Activated CD4-positive, alpha-beta memory T cell treated with anti-CD3 and anti-CD28 coated beads for 36 hours (primary cell): ENCODE measurements at regions of chr1 and their contacts with region 1.

Region 1: GRCh38 chr1:89125913-89126580 is at the start of gene GBP2:
- DNase-seq: peak; percentile 51
- H3K4me3 Mint-ChIP-seq: peak within 1 kb of the TSS; percentile 95
- H3K27ac Mint-ChIP-seq: peak within 1 kb of the TSS; percentile 99
- H3K4me1 Mint-ChIP-seq: peaks cover 54% of the 10 kb centered on the region
- H3K27me3 Mint-ChIP-seq: no peaks in the 10 kb centered on the region
- total RNA-seq, gene GBP2: 396 to 403 TPM

Region 2: DNA sequence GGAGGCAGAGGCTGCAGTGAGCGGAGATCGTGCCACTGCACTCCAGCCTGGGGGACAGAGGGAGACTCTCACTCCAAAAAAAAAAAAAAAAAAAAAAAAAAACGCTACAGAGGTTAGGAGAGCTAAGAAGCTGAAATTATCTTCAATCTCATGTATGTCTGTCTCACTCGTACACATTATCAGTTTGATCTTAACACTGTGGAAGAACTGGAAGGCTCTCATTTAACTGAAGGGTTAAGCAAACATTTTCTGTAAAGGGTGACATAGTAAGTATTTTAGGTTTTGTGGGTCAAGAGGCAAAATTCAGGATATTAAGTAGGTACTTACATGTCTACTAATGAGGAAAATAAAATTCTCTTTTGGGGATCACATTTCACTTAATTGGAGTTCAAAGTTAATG is 243.8 kb before region 1 on chr1:
- CTCF ChIA-PET with region 1: no interaction called
- POLR2A ChIA-PET with region 1: no interaction called
- intact Hi-C with region 1: no loop called
- DNase-seq: no peak
- H3K4me3 Mint-ChIP-seq: no peak overlapping the region
- H3K27ac Mint-ChIP-seq: peak overlapping the region; percentile 44
- H3K4me1 Mint-ChIP-seq: peaks cover 41% of the 10 kb centered on the region
- H3K27me3 Mint-ChIP-seq: no peaks in the 10 kb centered on the region

Region 3: DNA sequence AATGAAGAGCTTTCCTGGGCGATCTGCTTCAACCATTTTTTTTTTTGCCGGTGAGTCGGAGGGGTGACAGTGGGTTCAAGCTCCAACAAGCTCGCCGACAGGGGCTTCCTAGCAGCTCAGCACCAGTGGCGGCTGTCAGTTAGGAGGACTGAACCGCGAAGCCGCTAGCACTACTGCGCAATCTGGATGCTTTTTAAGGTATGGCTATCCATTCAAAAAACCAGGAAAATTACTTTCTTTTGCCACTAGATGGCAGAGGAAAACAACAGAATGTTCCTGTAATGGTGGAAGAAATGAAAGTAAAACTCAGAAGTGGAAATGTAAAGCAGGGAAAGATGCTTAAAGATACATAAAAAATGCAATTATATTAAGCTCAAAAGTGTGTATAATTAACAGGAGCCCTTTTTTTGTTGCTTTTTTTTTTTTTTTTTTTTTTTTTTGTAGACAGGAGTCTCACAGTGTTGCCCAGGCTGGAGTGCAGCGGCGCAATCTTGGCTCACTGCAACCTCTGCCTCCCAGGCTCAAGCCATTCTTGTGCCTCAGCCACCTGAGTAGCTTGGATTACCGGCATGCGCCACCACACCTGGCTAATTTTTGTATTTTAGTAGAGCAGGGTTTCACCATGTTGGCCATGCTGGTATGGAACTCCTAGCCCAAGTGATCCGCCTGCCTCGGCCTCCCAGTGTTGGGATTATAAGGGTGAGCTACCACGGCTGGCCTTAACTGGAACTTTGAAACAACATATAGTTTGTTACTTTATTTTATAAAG is 142.1 kb before region 1 on chr1:
- CTCF ChIA-PET with region 1: interaction called, 3 read pairs
- POLR2A ChIA-PET with region 1: no interaction called
- intact Hi-C with region 1: loop called (anchors 2 kb)
- DNase-seq: peak; percentile 41
- H3K4me3 Mint-ChIP-seq: peak overlapping the region; percentile 17
- H3K27ac Mint-ChIP-seq: peak overlapping the region; percentile 80
- H3K4me1 Mint-ChIP-seq: peaks cover 87% of the 10 kb centered on the region
- H3K27me3 Mint-ChIP-seq: no peaks in the 10 kb centered on the region

Region 4: GRCh38 chr1:89005286-89006151 is 120.5 kb before region 1 on chr1:
- CTCF ChIA-PET with region 1: no interaction called
- POLR2A ChIA-PET with region 1: no interaction called
- intact Hi-C with region 1: no loop called
- DNase-seq: no peak
- H3K4me3 Mint-ChIP-seq: no peak overlapping the region
- H3K27ac Mint-ChIP-seq: no peak overlapping the region
- H3K4me1 Mint-ChIP-seq: peaks cover 30% of the 10 kb centered on the region
- H3K27me3 Mint-ChIP-seq: no peaks in the 10 kb centered on the region

Region 5: DNA sequence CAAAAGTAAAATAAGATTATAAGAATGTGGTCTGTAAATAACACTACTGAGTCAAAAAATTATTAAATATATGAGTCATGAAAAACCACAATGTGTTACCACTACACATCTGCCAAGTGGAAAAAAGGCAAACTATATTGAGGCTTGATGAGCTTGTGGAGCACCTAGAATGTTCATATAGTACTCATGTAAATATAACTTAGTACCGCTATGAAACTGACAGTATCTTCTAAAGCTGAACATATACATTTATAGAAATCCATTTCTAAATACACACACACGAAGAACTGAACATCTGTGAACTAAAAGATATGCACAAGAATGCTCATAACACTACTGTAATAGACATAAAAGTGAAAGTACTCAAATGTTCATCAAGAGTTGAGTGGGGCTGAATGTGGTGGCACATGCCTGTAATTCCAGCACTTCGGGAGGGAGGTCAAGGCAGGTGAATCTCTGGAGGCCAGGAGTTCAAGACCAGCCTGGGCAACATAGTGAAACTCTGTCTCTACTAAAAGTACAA is 84.9 kb before region 1 on chr1:
- CTCF ChIA-PET with region 1: no interaction called
- POLR2A ChIA-PET with region 1: interaction called, 6 read pairs
- intact Hi-C with region 1: loop called (anchors 2 kb)
- DNase-seq: peak; percentile 66
- H3K4me3 Mint-ChIP-seq: no peak overlapping the region
- H3K27ac Mint-ChIP-seq: peak overlapping the region; percentile 70
- H3K4me1 Mint-ChIP-seq: peaks cover 41% of the 10 kb centered on the region
- H3K27me3 Mint-ChIP-seq: peaks cover 13% of the 10 kb centered on the region

Region 6: GRCh38 chr1:89085781-89086180 is 40.3 kb before region 1 on chr1:
- CTCF ChIA-PET with region 1: interaction called, 12 read pairs
- POLR2A ChIA-PET with region 1: no interaction called
- intact Hi-C with region 1: no loop called
- DNase-seq: peak; percentile 43
- H3K4me3 Mint-ChIP-seq: no peak overlapping the region
- H3K27ac Mint-ChIP-seq: no peak overlapping the region
- H3K4me1 Mint-ChIP-seq: peaks cover 6% of the 10 kb centered on the region
- H3K27me3 Mint-ChIP-seq: no peaks in the 10 kb centered on the region

Region 7: DNA sequence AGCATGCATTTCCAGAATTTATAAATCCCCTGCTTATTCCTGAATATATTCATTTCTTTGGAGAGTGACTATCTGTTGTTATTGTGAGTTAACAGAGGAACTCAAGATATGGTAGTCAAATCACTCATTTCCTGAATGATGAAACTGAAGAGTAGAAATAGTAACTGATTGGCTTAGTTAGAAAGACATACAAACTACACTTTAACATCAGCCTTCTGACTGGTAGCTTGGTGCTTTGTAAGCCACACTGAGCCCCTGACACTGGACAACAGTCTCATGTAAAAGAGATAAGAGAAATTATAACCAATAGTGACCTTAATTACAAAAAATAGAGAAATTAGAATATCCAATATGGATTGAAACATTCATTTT is 45.0 kb after region 1 on chr1:
- CTCF ChIA-PET with region 1: no interaction called
- POLR2A ChIA-PET with region 1: no interaction called
- intact Hi-C with region 1: loop called (anchors 2 kb)
- DNase-seq: no peak
- H3K4me3 Mint-ChIP-seq: no peak overlapping the region
- H3K27ac Mint-ChIP-seq: peak overlapping the region; percentile 50
- H3K4me1 Mint-ChIP-seq: peaks cover 7% of the 10 kb centered on the region
- H3K27me3 Mint-ChIP-seq: no peaks in the 10 kb centered on the region

Region 8: GRCh38 chr1:89358287-89358893 is 232.3 kb after region 1 on chr1:
- CTCF ChIA-PET with region 1: interaction called, 10 read pairs
- POLR2A ChIA-PET with region 1: interaction called, 7 read pairs
- intact Hi-C with region 1: loop called (anchors 1 kb)
- DNase-seq: peak; percentile 86
- H3K4me3 Mint-ChIP-seq: peak overlapping the region; percentile 68
- H3K27ac Mint-ChIP-seq: peak overlapping the region; percentile 72
- H3K4me1 Mint-ChIP-seq: peaks cover 41% of the 10 kb centered on the region
- H3K27me3 Mint-ChIP-seq: no peaks in the 10 kb centered on the region